ENCODE measurements at regions of chr3 and their contacts with region 1.

Region 1: DNA sequence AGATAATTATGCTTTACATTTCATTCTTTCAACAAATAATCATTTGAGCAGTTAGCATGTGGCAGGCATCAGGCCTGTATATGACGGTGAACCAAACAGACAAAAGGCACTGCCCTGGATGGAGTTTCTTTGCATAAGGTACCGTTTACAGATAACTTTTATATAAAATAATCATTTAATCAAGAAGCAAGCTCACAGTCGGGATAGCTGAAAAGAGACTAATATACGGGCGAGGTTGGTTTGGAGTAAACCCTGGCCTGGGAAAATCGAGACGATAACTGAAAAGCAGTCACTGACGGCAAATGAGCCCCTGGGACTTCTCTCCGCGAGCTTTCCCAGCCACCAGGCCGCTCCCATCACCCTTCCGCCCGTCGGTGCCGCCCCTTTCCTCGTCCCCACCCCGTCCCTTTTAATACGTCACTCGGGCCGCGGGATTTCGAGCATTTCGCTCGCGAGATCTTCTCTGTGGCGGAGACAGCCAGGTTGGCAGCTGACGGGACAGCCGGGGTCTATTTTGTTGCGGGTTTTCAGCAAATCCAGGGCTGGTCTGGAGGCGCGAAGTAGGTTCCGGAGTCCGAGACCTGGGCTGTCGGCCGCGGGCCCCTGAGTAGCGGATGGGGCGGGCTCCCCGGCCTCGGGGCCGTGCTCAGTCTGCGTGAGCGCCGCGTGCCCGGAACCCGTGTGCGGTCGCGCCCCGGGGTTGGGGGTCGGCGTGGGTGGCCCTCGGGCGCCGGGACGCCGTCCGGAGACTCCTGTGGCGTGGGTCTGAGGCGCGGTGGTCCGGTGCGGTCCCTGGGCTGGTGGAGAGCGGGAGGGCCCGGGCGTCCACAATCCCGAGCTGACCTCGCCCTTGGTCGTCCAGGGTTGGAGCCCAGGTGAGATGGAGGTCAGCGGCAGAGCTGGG is at the start of gene NMD3:
- DNase-seq: peak; percentile 92
- ATAC-seq: peak; percentile 97
- H3K4me3 ChIP-seq: peak within 1 kb of the TSS; percentile 71
- H3K27ac ChIP-seq: peak within 1 kb of the TSS; percentile 91
- H3K4me1 ChIP-seq: peaks cover 2% of the 10 kb centered on the region; the same call in 1 of the 2 replicates
- H3K27me3 ChIP-seq: no peaks in the 10 kb centered on the region
- CTCF ChIP-seq: no peak
- POLR2A ChIP-seq: peak; percentile 91
- RAD21 ChIP-seq: no peak
- total RNA-seq, gene NMD3: 95.0 and 103 TPM in 2 replicates

Region 2: GRCh38 chr3:160565442-160566403 is 655.4 kb before region 1 on chr3 and contains the start of gene KPNA4:
- CTCF ChIA-PET with region 1: no interaction called
- POLR2A ChIA-PET with region 1: no interaction called
- dilution Hi-C with region 1: no loop called
- in situ Hi-C with region 1: loop called (anchors 10 kb)
- intact Hi-C with region 1: loop called (anchors 10 kb)
- DNase-seq: peak; percentile 96
- ATAC-seq: peak; percentile 91
- H3K4me3 ChIP-seq: peak within 1 kb of the TSS; percentile 75
- H3K27ac ChIP-seq: peak within 1 kb of the TSS; percentile 95
- H3K4me1 ChIP-seq: no peaks in the 10 kb centered on the region
- H3K27me3 ChIP-seq: no peaks in the 10 kb centered on the region
- CTCF ChIP-seq: no peak
- POLR2A ChIP-seq: peak; percentile 93
- RAD21 ChIP-seq: no peak
- total RNA-seq, gene KPNA4: 46.1 and 57.8 TPM in 2 replicates

Region 3: DNA sequence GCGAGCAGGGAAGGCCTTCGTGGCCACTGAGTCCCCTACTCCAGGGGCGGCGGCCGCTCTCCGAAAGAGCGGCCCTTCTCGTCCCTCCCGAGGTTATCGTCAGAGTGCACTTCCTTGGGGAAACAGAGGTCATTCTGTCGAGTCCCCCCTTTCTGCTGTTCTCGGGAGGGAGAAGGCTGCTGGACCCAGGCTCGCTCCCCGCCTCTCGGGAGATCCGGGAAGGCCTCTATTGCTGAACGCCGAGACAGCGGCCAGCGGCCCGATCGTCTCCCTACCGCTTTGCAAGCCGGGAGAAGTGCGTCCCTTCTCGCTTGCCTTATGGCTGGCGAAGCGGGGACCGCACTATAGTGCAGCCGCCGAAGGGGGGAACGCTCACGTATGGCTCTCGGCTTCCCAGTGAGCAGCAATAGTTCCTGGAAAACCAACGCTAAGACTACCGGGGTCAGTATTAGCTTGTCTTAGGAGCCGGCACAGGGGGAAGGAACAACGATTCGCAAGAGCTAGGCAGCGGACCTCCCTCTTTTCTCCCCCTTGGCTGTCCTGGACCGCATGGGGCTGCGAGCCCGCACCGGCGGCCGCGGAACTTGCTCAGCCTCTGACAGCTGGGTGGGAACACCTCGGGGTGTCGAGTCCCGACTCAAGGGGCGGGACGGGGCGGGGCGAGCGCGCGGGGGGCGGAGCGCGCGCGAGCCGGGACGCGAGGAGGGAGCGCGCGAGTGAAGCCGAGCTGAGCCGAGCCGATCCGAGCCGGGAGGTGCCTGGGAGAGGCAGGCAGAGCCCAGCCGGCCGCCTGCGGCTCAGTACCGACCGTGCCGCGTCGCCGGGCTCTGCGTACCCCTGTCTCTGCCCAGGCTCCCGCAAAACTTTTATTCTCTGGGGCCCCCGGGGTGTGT is 466.0 kb before region 1 on chr3:
- CTCF ChIA-PET with region 1: no interaction called
- POLR2A ChIA-PET with region 1: no interaction called
- dilution Hi-C with region 1: no loop called
- in situ Hi-C with region 1: no loop called
- intact Hi-C with region 1: loop called (anchors 2 kb)
- DNase-seq: peak; percentile 88
- ATAC-seq: peak; percentile 93
- H3K4me3 ChIP-seq: peak overlapping the region; percentile 61
- H3K27ac ChIP-seq: peak overlapping the region; percentile 48
- H3K4me1 ChIP-seq: no peaks in the 10 kb centered on the region
- H3K27me3 ChIP-seq: peaks cover 12% of the 10 kb centered on the region
- CTCF ChIP-seq: no peak
- POLR2A ChIP-seq: peak; percentile 49; the same call in 1 of the 2 replicates
- RAD21 ChIP-seq: no peak

Region 4: DNA sequence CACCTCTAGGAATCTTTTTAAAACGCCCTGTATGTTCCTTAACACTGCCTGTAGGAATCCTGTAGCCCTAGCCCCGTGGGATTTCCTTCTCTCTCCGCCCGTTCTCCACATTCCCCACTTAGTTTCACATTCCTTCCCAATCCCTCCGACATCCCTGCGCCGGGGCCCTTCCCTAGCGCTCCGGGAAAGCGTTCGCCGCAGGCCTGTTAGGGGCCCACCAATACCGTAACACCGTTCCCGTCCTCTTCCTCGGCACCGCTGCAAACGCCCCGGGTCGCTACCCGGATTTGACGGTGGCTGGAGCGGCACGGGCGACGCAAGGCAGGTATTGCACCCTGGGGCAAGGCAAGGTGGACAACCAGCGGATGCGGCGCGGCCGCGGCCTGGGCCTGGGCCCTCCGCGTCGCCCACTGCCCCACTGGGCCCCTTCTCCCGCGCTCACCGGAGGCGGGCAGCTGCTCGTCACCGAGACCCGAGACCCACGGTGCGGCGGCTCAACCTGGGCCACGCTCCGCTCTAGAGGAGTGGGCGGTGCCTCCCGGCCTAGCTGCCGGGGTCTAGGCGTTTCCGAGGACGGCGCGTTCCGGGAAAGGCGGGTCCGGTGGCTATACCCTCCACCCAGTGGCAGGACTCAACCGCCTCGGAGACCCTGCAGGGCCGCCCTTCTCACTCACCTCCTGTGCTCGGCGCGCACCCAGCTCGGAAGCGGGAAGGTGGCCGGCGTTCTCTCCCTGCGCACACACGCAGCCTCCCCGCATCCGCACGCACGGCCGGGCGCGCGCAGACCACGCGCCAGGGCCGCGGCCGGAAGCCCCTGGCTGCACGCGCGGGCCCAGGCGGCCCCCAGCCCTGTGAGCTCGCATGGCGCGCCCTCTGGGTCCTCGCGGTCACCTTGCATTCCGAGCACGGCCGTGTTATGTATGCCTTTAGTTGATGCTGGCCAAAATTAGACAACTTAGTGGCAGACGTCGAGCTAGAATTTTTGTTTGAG is 116.2 kb before region 1 on chr3 and contains the start of gene B3GALNT1:
- CTCF ChIA-PET with region 1: interaction called, 4 read pairs
- POLR2A ChIA-PET with region 1: no interaction called
- dilution Hi-C with region 1: no loop called
- in situ Hi-C with region 1: no loop called
- intact Hi-C with region 1: loop called (anchors 2 kb)
- DNase-seq: peak; percentile 50
- ATAC-seq: peak; percentile 86
- H3K4me3 ChIP-seq: peak within 1 kb of the TSS; percentile 86
- H3K27ac ChIP-seq: peak within 1 kb of the TSS; percentile 34; the same call in 1 of the 2 replicates
- H3K4me1 ChIP-seq: no peaks in the 10 kb centered on the region
- H3K27me3 ChIP-seq: no peaks in the 10 kb centered on the region
- CTCF ChIP-seq: no peak
- POLR2A ChIP-seq: no peak
- RAD21 ChIP-seq: no peak
- total RNA-seq, gene B3GALNT1: 8.2 and 8.6 TPM in 2 replicates

Region 5: GRCh38 chr3:161187046-161187445 is 34.1 kb before region 1 on chr3:
- CTCF ChIA-PET with region 1: no interaction called
- POLR2A ChIA-PET with region 1: no interaction called
- dilution Hi-C with region 1: no loop called
- in situ Hi-C with region 1: no loop called
- intact Hi-C with region 1: no loop called
- DNase-seq: no peak
- ATAC-seq: no peak
- H3K4me3 ChIP-seq: no peak overlapping the region
- H3K27ac ChIP-seq: no peak overlapping the region
- H3K4me1 ChIP-seq: no peaks in the 10 kb centered on the region
- H3K27me3 ChIP-seq: no peaks in the 10 kb centered on the region
- CTCF ChIP-seq: no peak
- POLR2A ChIP-seq: no peak
- RAD21 ChIP-seq: no peak

Region 6: GRCh38 chr3:161239703-161240102 is 18.6 kb after region 1 on chr3:
- CTCF ChIA-PET with region 1: no interaction called
- POLR2A ChIA-PET with region 1: no interaction called
- dilution Hi-C with region 1: no loop called
- in situ Hi-C with region 1: no loop called
- intact Hi-C with region 1: loop called (anchors 1 kb)
- DNase-seq: peak; percentile 41
- ATAC-seq: 0 out of 2 replicates have a peak, but pooled peaks have one; percentile 27
- H3K4me3 ChIP-seq: no peak overlapping the region
- H3K27ac ChIP-seq: no peak overlapping the region
- H3K4me1 ChIP-seq: no peaks in the 10 kb centered on the region
- H3K27me3 ChIP-seq: no peaks in the 10 kb centered on the region
- CTCF ChIP-seq: no peak
- POLR2A ChIP-seq: no peak
- RAD21 ChIP-seq: no peak

Region 7: GRCh38 chr3:161254861-161255260 is 33.8 kb after region 1 on chr3:
- CTCF ChIA-PET with region 1: no interaction called
- POLR2A ChIA-PET with region 1: no interaction called
- dilution Hi-C with region 1: no loop called
- in situ Hi-C with region 1: no loop called
- intact Hi-C with region 1: loop called (anchors 5 kb)
- DNase-seq: no peak
- ATAC-seq: no peak
- H3K4me3 ChIP-seq: no peak overlapping the region
- H3K27ac ChIP-seq: no peak overlapping the region
- H3K4me1 ChIP-seq: peaks cover 8% of the 10 kb centered on the region
- H3K27me3 ChIP-seq: no peaks in the 10 kb centered on the region
- CTCF ChIP-seq: no peak
- POLR2A ChIP-seq: no peak
- RAD21 ChIP-seq: no peak

Measured in IMR-90 (cell line).